GM10248 (cell line): ENCODE measurements at regions of chr1 and their contacts with region 1.

Region 1: DNA sequence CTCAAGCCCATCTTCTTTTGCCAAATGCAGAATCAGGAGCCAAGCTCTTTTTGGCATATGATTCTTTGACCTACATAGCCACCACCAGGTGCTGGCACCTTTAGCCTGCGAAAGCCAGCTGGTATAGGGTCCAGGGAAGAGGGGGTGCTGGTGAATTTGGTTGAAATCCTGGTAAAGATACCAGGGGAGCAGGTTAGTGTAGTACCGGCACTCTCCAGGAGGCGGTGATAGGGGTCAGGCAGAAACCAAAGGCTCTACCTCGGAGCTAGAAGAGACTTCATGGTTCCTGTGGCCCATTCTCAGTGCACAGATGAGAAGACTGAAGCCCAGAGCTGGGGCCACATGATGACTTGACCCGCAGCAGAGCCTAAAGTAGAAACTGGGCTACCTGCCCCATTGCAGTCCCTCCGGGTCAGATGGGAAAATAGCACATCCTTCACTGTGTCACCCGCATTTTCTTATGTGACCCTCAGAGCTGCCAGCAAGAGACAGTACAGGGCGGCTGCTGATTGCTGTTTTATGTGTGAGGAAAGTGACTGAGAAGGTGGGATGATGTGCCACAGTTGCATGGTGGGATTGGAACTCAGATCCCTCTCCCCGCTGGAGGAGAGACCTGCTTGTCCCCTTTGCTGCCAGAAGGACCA is 36.0 kb upstream of the IL19 start:
- DNase-seq: peak; percentile 73
- CTCF ChIP-seq: peak; percentile 77

Region 2: GRCh38 chr1:206556750-206557635 is 177.6 kb before region 1 on chr1:
- CTCF ChIA-PET with region 1: no interaction called
- POLR2A ChIA-PET with region 1: no interaction called
- DNase-seq: peak; percentile 80
- CTCF ChIP-seq: no peak

Region 3: GRCh38 chr1:206693029-206693428 is 41.6 kb before region 1 on chr1:
- CTCF ChIA-PET with region 1: interaction called, 11 read pairs
- POLR2A ChIA-PET with region 1: no interaction called
- DNase-seq: no peak
- CTCF ChIP-seq: no peak

Region 4: GRCh38 chr1:206744683-206745082 is 10.1 kb after region 1 on chr1:
- CTCF ChIA-PET with region 1: interaction called, 12 read pairs
- POLR2A ChIA-PET with region 1: no interaction called
- DNase-seq: no peak
- CTCF ChIP-seq: no peak

Region 5: DNA sequence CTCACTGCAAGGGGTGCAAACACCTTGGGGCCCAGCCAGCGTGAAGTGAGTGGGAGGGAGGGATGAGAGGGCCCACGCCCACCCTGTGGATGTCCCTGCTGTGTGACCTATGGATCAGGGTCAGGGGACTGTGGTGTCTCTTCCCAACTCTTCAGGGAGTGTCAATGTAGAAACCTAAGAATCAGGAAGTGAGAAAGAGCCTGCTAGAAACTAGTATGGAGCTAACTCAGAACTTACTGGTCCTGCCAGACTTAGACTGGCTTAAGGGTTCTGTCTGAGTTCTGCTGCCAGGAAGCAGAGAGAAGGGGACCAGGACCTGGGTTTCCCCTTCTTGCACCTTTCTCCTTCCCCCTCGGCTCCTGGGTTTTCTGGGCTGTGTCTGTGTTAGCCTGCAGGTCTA is 39.5 kb after region 1 on chr1:
- CTCF ChIA-PET with region 1: interaction called, 47 read pairs
- POLR2A ChIA-PET with region 1: interaction called, 6 read pairs
- DNase-seq: no peak
- CTCF ChIP-seq: no peak

Region 6: DNA sequence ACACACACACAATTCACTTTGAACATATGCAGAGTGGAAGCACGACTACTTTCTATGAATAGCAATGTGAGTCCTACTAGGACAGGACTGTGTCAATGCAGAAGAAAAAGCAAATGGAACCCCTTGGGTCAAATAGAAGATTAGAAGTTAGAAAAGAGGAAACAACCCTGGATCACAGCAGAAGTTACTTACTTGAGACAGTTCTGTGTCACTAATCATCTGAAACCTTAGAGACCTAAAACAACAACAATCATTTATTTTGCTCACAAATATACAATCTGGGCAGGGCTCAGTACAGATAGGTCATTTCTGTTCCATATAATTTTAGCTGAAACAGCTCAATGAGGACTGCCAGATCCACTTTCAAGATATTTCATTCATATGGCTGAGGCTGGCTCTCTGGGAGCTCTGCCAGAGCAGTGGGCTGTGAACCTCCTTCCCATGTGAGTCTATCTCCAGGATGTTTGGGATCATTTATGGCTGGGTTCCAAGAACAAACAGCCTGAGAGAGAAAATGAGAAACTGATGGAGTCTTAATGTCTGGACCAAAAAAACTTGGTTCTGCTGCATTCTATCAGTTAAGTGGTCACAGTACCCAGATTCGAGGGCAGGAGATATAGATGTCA is 80.2 kb after region 1 on chr1:
- CTCF ChIA-PET with region 1: interaction called, 464 read pairs
- POLR2A ChIA-PET with region 1: no interaction called
- DNase-seq: no peak
- CTCF ChIP-seq: no peak

Region 7: DNA sequence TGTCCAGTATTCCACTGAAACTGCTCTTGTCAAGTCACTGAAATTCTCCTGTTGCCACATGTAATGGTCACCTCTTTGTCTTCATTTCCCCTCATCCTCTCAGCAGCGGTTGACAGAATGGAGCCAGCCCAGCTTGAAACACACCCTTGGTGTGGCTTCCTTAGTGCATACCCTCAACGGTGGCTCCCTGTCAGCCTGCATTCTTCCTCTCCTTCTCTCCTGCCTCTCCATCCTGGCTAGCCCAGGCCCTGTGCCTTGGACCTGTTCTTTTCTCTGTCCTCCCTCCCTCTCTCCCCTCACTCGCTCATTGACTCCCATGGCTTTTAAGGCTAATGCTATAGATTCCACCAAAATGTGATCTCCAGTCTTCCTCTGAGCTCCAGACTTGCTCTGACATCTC is 183.5 kb after region 1 on chr1:
- CTCF ChIA-PET with region 1: interaction called, 68 read pairs
- POLR2A ChIA-PET with region 1: no interaction called
- DNase-seq: no peak
- CTCF ChIP-seq: no peak

Region 8: DNA sequence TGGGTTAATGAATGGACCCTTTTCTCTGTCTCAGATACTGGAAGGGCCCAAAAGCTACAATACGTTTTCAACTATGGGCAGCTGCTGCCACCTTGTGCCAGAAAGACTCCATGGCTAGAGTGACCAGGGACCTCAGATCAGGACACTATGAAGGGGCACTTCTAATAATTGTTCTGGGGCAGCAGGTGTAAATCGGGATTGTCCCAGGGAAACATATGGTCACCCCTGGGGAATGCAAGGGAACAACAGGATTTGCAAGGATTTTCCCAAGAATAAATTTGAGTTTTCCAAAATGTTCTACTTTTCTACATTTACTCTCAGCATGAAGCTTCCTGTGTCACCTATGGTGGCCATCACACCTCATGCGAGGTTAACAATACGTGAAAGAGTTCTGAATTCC is 247.6 kb after region 1 on chr1:
- CTCF ChIA-PET with region 1: interaction called, 69 read pairs
- POLR2A ChIA-PET with region 1: no interaction called
- DNase-seq: peak; percentile 77
- CTCF ChIP-seq: peak; percentile 85